ENCODE measurements at regions of chr3 and their contacts with region 1.

Region 1: DNA sequence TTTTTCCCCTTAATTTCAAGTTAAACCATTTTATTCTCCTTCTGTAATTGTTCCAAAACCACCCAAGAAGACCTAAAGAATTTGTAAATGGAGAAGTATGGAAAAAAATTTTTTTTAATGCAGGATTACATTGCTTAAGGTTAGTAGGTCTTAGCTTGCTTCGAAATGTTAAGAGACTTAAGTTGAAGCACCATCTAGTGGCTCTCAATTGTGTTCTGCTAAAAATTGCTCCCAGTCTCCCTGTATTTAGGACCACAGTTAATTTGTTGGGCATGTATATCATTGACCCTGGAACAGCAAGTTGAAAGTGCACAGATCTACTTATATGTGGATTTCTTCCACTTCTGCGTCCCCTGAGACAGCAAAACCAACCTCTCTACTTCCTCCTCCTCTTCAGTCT is 32.4 kb downstream of the CD200R1L start:
- DNase-seq: peak; percentile 51
- ATAC-seq: no peak
- H3K4me3 ChIP-seq: no peak overlapping the region
- H3K4me3 Mint-ChIP-seq: peak overlapping the region; percentile 66
- H3K27ac ChIP-seq: peak overlapping the region; percentile 15 to 50
- H3K27ac Mint-ChIP-seq: peak overlapping the region; percentile 71
- H3K4me1 ChIP-seq: peaks cover 30 to 42% of the 10 kb centered on the region in 2 donors
- H3K4me1 Mint-ChIP-seq: peaks cover 53% of the 10 kb centered on the region
- H3K27me3 ChIP-seq: no peaks in the 10 kb centered on the region
- H3K27me3 Mint-ChIP-seq: no peaks in the 10 kb centered on the region
- CTCF ChIP-seq: no peak

Region 2: GRCh38 chr3:112086076-112086854 is 728.0 kb before region 1 on chr3 and contains the start of gene C3orf52:
- CTCF ChIA-PET with region 1: no interaction called
- POLR2A ChIA-PET with region 1: no interaction called
- intact Hi-C with region 1: no loop called
- DNase-seq: peak; percentile 61
- ATAC-seq: peak; percentile 89
- H3K4me3 ChIP-seq: peak within 1 kb of the TSS in 4 of 5 experiments; percentile 54 to 66 (median 60)
- H3K4me3 Mint-ChIP-seq: peak within 1 kb of the TSS; percentile 86
- H3K27ac ChIP-seq: no peak within 1 kb of the TSS
- H3K27ac Mint-ChIP-seq: peak within 1 kb of the TSS; percentile 58
- H3K4me1 ChIP-seq: peaks cover 14 to 26% of the 10 kb centered on the region in 2 donors
- H3K4me1 Mint-ChIP-seq: peaks cover 26% of the 10 kb centered on the region
- H3K27me3 ChIP-seq: peaks cover 0 to 38% (median 22%) of the 10 kb centered on the region in 4 experiments
- H3K27me3 Mint-ChIP-seq: peaks cover 30% of the 10 kb centered on the region
- CTCF ChIP-seq: no peak
- total RNA-seq, gene C3orf52: 2.7 and 3.9 TPM in 2 replicates

Region 3: DNA sequence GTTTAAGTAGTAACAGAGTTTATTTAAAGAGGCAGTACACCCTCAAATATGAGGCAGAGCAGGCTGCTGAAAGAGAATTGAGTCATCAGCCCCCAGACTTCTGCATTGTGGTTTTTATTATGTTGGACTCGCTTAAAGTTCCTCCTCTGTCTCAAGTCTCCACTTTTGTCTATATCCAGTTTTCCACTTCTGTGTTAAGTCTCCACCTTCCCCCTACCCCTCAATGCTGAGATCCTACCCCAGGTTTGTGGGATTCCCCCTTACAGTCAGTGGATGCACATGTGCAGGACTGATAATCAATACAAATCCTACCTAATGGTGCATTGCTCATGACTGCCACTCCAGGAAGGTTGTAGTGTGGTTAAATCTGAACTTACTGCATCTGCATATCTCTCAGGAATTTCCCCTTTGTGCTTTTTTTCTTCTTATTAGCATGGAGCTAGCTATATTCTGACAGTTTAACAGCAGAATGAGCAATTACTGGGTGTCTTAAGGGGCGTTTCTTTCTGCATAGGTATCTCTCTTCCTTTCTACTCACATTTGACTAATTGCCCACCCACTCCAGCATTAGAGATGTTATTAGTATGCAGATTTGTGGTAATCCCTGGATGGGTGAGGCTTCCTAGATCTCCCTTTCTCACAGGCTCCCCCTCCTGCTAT is 44.3 kb after region 1 on chr3:
- CTCF ChIA-PET with region 1: no interaction called
- POLR2A ChIA-PET with region 1: no interaction called
- intact Hi-C with region 1: loop called (anchors 5 kb)
- DNase-seq: peak; percentile 50
- ATAC-seq: peak; percentile 65
- H3K4me3 ChIP-seq: no peak overlapping the region
- H3K4me3 Mint-ChIP-seq: peak overlapping the region; percentile 66
- H3K27ac ChIP-seq: no peak overlapping the region
- H3K27ac Mint-ChIP-seq: peak overlapping the region; percentile 69
- H3K4me1 ChIP-seq: peaks cover 25 to 32% of the 10 kb centered on the region in 2 donors
- H3K4me1 Mint-ChIP-seq: peaks cover 37% of the 10 kb centered on the region
- H3K27me3 ChIP-seq: no peaks in the 10 kb centered on the region
- H3K27me3 Mint-ChIP-seq: no peaks in the 10 kb centered on the region
- CTCF ChIP-seq: no peak

Region 4: DNA sequence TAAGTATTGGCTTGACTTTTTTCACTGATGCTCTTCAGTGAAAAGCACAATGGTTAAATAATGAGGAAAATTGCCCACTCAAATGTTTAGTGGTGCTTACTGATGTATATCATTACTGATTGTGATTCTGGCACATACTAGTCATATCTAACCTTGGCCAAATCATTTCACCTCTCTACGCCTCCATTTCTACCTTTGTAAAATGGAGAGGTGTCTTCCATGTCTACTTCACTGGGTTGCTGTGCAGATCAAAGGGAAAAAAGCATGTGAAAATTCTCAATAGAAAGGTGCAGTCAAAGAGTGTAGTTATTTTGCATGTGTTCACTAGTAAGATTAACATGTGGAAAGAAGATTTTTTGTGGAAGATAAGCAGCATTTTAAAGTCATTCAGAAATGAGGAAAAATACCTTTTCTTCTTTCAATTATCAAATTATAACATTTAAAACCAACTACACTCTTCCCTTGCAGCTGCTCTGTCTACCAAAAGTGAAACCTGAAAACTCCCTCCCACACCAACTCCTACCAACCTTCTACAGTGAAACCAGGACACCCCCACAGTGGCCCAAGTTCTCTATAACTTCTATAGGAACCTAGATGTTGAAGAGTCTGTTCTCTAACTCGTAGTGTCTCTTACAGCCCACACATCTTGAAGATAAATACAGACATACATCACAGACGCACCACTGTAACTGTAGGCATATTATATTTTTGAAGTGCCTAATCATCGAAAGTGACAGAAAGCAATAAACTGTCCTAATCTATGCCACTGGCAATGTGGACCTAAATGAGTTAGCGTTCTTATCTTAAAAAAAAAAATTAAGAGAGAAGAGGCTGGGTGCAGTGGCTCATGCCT is 159.3 kb after region 1 on chr3:
- CTCF ChIA-PET with region 1: interaction called, 12 read pairs
- POLR2A ChIA-PET with region 1: no interaction called
- intact Hi-C with region 1: loop called (anchors 2 kb)
- DNase-seq: peak; percentile 60
- ATAC-seq: peak; percentile 85
- H3K4me3 ChIP-seq: peak overlapping the region in 4 of 5 experiments; percentile 32 to 52 (median 42)
- H3K4me3 Mint-ChIP-seq: peak overlapping the region; percentile 82
- H3K27ac ChIP-seq: peak overlapping the region in 1 of 2 donors; percentile 28
- H3K27ac Mint-ChIP-seq: peak overlapping the region; percentile 78
- H3K4me1 ChIP-seq: peaks cover 45 to 54% of the 10 kb centered on the region in 2 donors
- H3K4me1 Mint-ChIP-seq: peaks cover 72% of the 10 kb centered on the region
- H3K27me3 ChIP-seq: no peaks in the 10 kb centered on the region
- H3K27me3 Mint-ChIP-seq: no peaks in the 10 kb centered on the region
- CTCF ChIP-seq: no peak

Region 5: GRCh38 chr3:113051302-113051711 is 237.0 kb after region 1 on chr3:
- CTCF ChIA-PET with region 1: no interaction called
- POLR2A ChIA-PET with region 1: no interaction called
- intact Hi-C with region 1: no loop called
- DNase-seq: peak; percentile 88
- ATAC-seq: peak; percentile 100
- H3K4me3 ChIP-seq: no peak overlapping the region
- H3K4me3 Mint-ChIP-seq: no peak overlapping the region
- H3K27ac ChIP-seq: no peak overlapping the region
- H3K27ac Mint-ChIP-seq: no peak overlapping the region
- H3K4me1 ChIP-seq: peaks cover 0 to 4% of the 10 kb centered on the region in 2 donors
- H3K4me1 Mint-ChIP-seq: peaks cover 2% of the 10 kb centered on the region
- H3K27me3 ChIP-seq: no peaks in the 10 kb centered on the region
- H3K27me3 Mint-ChIP-seq: no peaks in the 10 kb centered on the region
- CTCF ChIP-seq: peak; percentile 95

Measured in B cell (primary cell).